BJ (cell line): ENCODE measurements at regions of chr6 and their contacts with region 1.

Region 1: GRCh38 chr6:136643850-136644596 is 93.8 kb upstream of the MAP7 start:
- DNase-seq: peak; percentile 44
- H3K4me3 ChIP-seq: no peak overlapping the region
- H3K27me3 ChIP-seq: no peaks in the 10 kb centered on the region
- CTCF ChIP-seq: peak; percentile 93

Region 2: GRCh38 chr6:136582711-136583471 is 61.1 kb before region 1 on chr6:
- CTCF ChIA-PET with region 1: interaction called, 17 read pairs
- POLR2A ChIA-PET with region 1: no interaction called
- DNase-seq: peak; percentile 83
- H3K4me3 ChIP-seq: no peak overlapping the region
- H3K27me3 ChIP-seq: no peaks in the 10 kb centered on the region
- CTCF ChIP-seq: peak; percentile 49

Region 3: GRCh38 chr6:136633355-136633754 is 10.7 kb before region 1 on chr6:
- CTCF ChIA-PET with region 1: interaction called, 44 read pairs
- POLR2A ChIA-PET with region 1: no interaction called
- DNase-seq: no peak
- H3K4me3 ChIP-seq: no peak overlapping the region
- H3K27me3 ChIP-seq: no peaks in the 10 kb centered on the region
- CTCF ChIP-seq: no peak

Region 4: DNA sequence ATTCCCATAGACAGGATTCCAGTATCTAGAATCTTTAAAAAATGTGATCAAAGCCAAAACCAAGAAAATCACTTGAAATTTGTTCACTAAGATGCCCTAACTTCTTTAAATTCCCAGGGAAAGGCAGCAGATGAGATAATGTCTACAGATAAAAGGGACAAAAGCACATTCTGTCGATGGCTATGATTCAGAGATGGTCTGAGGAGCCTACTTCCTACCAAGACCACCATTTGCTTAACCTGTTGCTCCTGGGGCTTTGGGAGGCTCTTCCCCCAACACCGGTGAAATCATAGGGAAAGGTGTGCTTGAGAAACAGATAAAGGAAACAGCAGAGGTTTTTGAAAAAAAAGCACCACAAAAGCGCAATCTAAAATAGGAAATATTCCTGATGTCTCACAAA is 24.5 kb after region 1 on chr6:
- CTCF ChIA-PET with region 1: interaction called, 10 read pairs
- POLR2A ChIA-PET with region 1: no interaction called
- DNase-seq: no peak
- H3K4me3 ChIP-seq: no peak overlapping the region
- H3K27me3 ChIP-seq: no peaks in the 10 kb centered on the region
- CTCF ChIP-seq: no peak

Region 5: GRCh38 chr6:136803608-136804007 is 159.6 kb after region 1 on chr6:
- CTCF ChIA-PET with region 1: interaction called, 20 read pairs
- POLR2A ChIA-PET with region 1: no interaction called
- DNase-seq: no peak
- H3K4me3 ChIP-seq: no peak overlapping the region
- H3K27me3 ChIP-seq: no peaks in the 10 kb centered on the region
- CTCF ChIP-seq: no peak

Region 6: GRCh38 chr6:137025786-137026456 is 381.9 kb after region 1 on chr6:
- CTCF ChIA-PET with region 1: no interaction called
- POLR2A ChIA-PET with region 1: no interaction called
- DNase-seq: no peak
- H3K4me3 ChIP-seq: no peak overlapping the region
- H3K27me3 ChIP-seq: no peaks in the 10 kb centered on the region
- CTCF ChIP-seq: no peak